Ascending aorta (tissue), 2 donors: ENCODE measurements at regions of chr15 and their contacts with region 1.

Region 1: DNA sequence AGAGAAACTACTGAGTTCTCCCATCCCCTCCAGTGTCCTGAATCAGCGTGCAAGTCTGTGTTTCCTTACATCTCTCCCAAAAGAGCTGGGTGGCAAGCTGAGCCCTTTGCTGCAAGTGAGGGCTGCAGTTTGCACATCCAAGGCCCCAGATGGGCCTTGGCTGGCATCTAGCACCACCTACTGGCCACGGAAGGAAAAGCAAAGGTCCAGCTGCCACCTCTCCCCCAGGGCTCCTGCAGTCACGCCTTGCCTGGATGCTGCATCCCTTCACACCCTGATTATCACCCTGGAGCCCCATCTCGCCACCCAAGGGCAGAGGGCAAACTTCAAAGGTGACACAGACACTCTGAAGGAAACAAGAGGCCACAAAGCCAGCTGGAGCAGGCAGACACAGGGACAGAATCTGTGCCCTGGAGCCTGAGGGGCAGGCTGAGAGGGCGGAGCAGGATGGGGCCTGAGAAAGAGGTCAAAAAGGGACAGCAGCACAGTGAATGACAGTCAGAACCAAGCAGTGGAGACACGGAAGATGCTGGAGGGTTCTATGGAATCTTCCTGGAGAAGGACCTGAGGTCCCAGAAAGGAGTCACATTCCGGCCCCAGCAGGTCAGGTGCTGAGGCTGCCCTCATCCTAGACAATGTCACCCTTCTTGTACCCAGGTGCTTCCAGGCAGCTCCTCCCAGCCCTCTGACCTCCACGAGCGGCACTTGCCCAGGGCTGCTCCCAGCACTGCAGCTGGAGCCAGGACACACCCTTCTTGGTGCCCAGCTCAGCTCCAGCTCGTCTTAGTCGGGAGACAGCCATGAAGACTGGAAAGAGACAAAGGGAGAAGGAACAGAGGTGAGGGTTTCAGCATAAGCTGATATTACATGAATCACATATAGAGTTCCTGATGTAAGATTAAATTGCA is 18.3 kb upstream of the NTRK3 start:
- DNase-seq: peak in 1 of 2 donors; percentile 79
- H3K4me3 ChIP-seq: no peak overlapping the region
- H3K27ac ChIP-seq: no peak overlapping the region
- H3K4me1 ChIP-seq: no peaks in the 10 kb centered on the region
- H3K27me3 ChIP-seq: no peaks in the 10 kb centered on the region
- CTCF ChIP-seq: peak; percentile 83 to 93 (median 86)

Region 2: GRCh38 chr15:87672309-87673288 is 602.2 kb before region 1 on chr15:
- intact Hi-C with region 1: loop called (anchors 2 kb)
- DNase-seq: no peak
- H3K4me3 ChIP-seq: no peak overlapping the region
- H3K27ac ChIP-seq: no peak overlapping the region
- H3K4me1 ChIP-seq: peaks cover 0 to 2% of the 10 kb centered on the region in 2 donors
- H3K27me3 ChIP-seq: no peaks in the 10 kb centered on the region
- CTCF ChIP-seq: peak; percentile 35 to 56 (median 48)

Region 3: GRCh38 chr15:87752250-87752951 is 522.4 kb before region 1 on chr15:
- intact Hi-C with region 1: loop called (anchors 10 kb)
- DNase-seq: no peak
- H3K4me3 ChIP-seq: no peak overlapping the region
- H3K27ac ChIP-seq: no peak overlapping the region
- H3K4me1 ChIP-seq: peaks cover 4 to 11% of the 10 kb centered on the region in 2 donors
- H3K27me3 ChIP-seq: no peaks in the 10 kb centered on the region
- CTCF ChIP-seq: no peak

Region 4: GRCh38 chr15:88258093-88258641 is 16.6 kb before region 1 on chr15:
- intact Hi-C with region 1: loop called (anchors 1 kb)
- DNase-seq: peak in 1 of 2 donors; percentile 90
- H3K4me3 ChIP-seq: peak overlapping the region; percentile 76 to 79
- H3K27ac ChIP-seq: peak overlapping the region; percentile 83 to 86
- H3K4me1 ChIP-seq: peaks cover 4 to 12% of the 10 kb centered on the region in 2 donors
- H3K27me3 ChIP-seq: no peaks in the 10 kb centered on the region
- CTCF ChIP-seq: peak in 2 of 3 experiments; percentile 41 to 60